ENCODE measurements at regions of chr13 and their contacts with region 1.

Region 1: GRCh38 chr13:44561351-44561750 is 14.8 kb downstream of the TSC22D1 start:
- DNase-seq: no peak
- H3K4me3 ChIP-seq: no peak overlapping the region
- CTCF ChIP-seq: no peak

Region 2: GRCh38 chr13:44543369-44543768 is 18.0 kb before region 1 on chr13:
- CTCF ChIA-PET with region 1: no interaction called
- POLR2A ChIA-PET with region 1: no interaction called
- DNase-seq: no peak
- H3K4me3 ChIP-seq: no peak overlapping the region
- CTCF ChIP-seq: no peak

Region 3: GRCh38 chr13:44573790-44574465 is 12.6 kb after region 1 on chr13:
- CTCF ChIA-PET with region 1: interaction called, 11 read pairs
- POLR2A ChIA-PET with region 1: interaction called, 3 read pairs
- DNase-seq: no peak
- H3K4me3 ChIP-seq: peak overlapping the region; percentile 83
- CTCF ChIP-seq: peak; percentile 66

Measured in AG04449 (cell line).